T-cell (primary cell): ENCODE measurements at regions of chr6 and their contacts with region 1.

Region 1: DNA sequence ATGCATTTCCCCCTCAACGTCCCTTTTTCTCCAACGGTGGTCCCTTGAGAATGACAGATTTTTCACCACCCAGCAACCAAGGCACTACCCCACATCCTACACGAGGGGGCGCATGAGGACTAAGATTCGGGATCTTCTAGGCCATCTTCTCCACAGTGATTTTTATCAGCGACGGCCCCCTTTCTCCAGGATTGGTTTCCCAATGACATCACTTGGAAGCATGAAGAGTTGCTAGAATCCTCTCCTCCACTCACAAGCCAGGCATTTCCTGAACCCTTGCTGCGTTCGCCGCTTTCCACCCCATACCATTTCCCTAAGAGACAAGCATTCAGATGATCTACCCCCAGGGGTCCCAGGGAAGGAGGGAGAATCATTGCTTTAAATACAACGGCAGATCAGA is 252.0 kb downstream of the HIVEP2 start:
- DNase-seq: peak; percentile 15 to 82 (median 58)
- ATAC-seq: peak; percentile 72 to 81 (median 78)
- H3K4me3 ChIP-seq: no peak overlapping the region
- H3K4me3 Mint-ChIP-seq: peak overlapping the region in 1 of 3 donors; percentile 2
- H3K27ac ChIP-seq: no peak overlapping the region
- H3K27ac Mint-ChIP-seq: no peak overlapping the region
- H3K4me1 ChIP-seq: peaks cover 4 to 14% of the 10 kb centered on the region in 2 experiments
- H3K4me1 Mint-ChIP-seq: peaks cover 16 to 21% (median 16%) of the 10 kb centered on the region in 3 donors
- H3K27me3 ChIP-seq: no peaks in the 10 kb centered on the region
- H3K27me3 Mint-ChIP-seq: no peaks in the 10 kb centered on the region

Region 2: DNA sequence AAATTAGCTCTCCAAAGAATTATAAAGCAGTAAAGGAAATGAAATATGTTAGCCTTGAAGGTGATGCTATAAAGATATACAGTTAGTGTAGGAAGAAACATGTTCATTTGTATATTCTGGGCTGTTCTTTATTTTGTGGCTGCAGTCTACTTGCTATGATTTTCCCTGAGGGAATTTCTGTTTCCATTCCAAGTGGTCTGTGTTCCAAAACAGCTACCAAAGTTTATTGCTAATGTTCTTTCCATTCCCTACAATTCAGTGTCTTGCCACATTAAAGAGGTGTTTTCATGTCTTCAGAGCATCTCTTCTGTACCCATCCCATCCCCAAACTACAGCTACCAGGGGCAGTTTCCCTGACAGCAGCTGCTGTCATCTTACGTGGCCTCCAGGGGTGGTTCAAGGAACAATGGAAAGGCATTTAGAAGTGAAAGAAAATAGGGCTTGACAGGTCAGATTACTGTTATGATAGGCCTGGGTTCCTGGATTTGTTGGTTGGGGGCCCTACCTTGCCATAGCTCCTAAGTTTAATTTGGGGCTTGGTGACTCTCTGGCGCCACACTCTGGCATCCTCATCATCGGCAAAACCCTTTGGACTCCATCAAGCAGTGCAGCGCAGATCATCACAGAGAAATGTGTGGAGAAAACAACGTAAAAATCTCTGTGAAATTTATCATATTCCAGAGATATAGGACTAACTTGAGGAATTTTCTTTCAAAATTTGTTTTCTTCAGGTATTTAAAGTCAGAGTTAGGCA is 333.9 kb after region 1 on chr6:
- CTCF ChIA-PET with region 1: interaction called, 9 to 33 read pairs
- POLR2A ChIA-PET with region 1: no interaction called
- DNase-seq: peak in 32 of 35 experiments; percentile 10 to 70 (median 40)
- ATAC-seq: peak in 3 of 4 experiments; percentile 51 to 62 (median 59)
- H3K4me3 ChIP-seq: no peak overlapping the region
- H3K4me3 Mint-ChIP-seq: no peak overlapping the region
- H3K27ac ChIP-seq: no peak overlapping the region
- H3K27ac Mint-ChIP-seq: peak overlapping the region in 1 of 2 donors; percentile 50
- H3K4me1 ChIP-seq: no peaks in the 10 kb centered on the region
- H3K4me1 Mint-ChIP-seq: peaks cover 0 to 4% (median 0%) of the 10 kb centered on the region in 3 donors
- H3K27me3 ChIP-seq: no peaks in the 10 kb centered on the region
- H3K27me3 Mint-ChIP-seq: peaks cover 0 to 3% of the 10 kb centered on the region in 2 donors

Region 3: GRCh38 chr6:143878316-143878924 is 1185.5 kb after region 1 on chr6:
- CTCF ChIA-PET with region 1: interaction called in 1 of 2 experiments, 15 read pairs
- POLR2A ChIA-PET with region 1: no interaction called
- DNase-seq: no peak
- ATAC-seq: no peak
- H3K4me3 ChIP-seq: no peak overlapping the region
- H3K4me3 Mint-ChIP-seq: no peak overlapping the region
- H3K27ac ChIP-seq: no peak overlapping the region
- H3K27ac Mint-ChIP-seq: no peak overlapping the region
- H3K4me1 ChIP-seq: no peaks in the 10 kb centered on the region
- H3K4me1 Mint-ChIP-seq: peaks cover 0 to under 1% (median 0%) of the 10 kb centered on the region in 3 donors
- H3K27me3 ChIP-seq: no peaks in the 10 kb centered on the region
- H3K27me3 Mint-ChIP-seq: peaks cover 0 to 4% of the 10 kb centered on the region in 2 donors